ENCODE measurements at regions of chr12 and their contacts with region 1.

Region 1: DNA sequence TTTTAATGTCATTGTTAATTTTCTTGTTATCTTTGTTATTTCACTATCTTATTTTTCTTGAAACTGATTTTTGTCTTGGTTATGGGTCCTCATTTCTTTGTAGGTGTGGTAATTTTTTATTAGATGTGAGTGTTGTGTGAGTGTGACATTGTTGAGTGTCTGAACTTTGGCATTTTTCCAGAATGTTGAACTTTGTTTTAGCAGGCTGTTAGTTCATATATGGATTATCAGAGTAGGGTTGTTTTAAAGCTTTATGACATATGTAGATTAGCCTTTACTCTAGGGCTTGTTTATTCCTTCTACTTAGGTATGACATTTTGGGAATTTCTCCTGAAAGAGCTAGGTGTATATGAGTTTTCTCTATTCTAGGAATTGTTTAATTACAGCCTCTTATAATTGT is 103.9 kb downstream of the ARID2 start:
- DNase-seq: peak; percentile 12
- ATAC-seq: no peak
- H3K4me3 ChIP-seq: no peak overlapping the region
- H3K27ac ChIP-seq: no peak overlapping the region
- H3K4me1 ChIP-seq: peaks cover 11% of the 10 kb centered on the region
- H3K27me3 ChIP-seq: no peaks in the 10 kb centered on the region
- CTCF ChIP-seq: no peak
- EP300 ChIP-seq: no peak
- POLR2A ChIP-seq: no peak
- RAD21 ChIP-seq: no peak

Region 2: GRCh38 chr12:45688183-45688582 is 145.2 kb before region 1 on chr12:
- CTCF ChIA-PET with region 1: no interaction called
- POLR2A ChIA-PET with region 1: no interaction called
- in situ Hi-C with region 1: no loop called
- intact Hi-C with region 1: no loop called
- DNase-seq: no peak
- ATAC-seq: no peak
- H3K4me3 ChIP-seq: no peak overlapping the region
- H3K27ac ChIP-seq: no peak overlapping the region
- H3K4me1 ChIP-seq: no peaks in the 10 kb centered on the region
- H3K27me3 ChIP-seq: peaks cover 4 to 9% of the 10 kb centered on the region in 2 experiments; a peak in 2 of 5 replicates
- CTCF ChIP-seq: no peak
- EP300 ChIP-seq: no peak
- POLR2A ChIP-seq: no peak
- RAD21 ChIP-seq: no peak

Region 3: GRCh38 chr12:45762185-45763110 is 71.0 kb before region 1 on chr12:
- CTCF ChIA-PET with region 1: no interaction called
- POLR2A ChIA-PET with region 1: no interaction called
- in situ Hi-C with region 1: no loop called
- intact Hi-C with region 1: loop called (anchors 10 kb)
- DNase-seq: peak; percentile 28
- ATAC-seq: peak; percentile 80
- H3K4me3 ChIP-seq: no peak overlapping the region
- H3K27ac ChIP-seq: peak overlapping the region; percentile 61
- H3K4me1 ChIP-seq: peaks cover 18% of the 10 kb centered on the region
- H3K27me3 ChIP-seq: no peaks in the 10 kb centered on the region
- CTCF ChIP-seq: peak; percentile 61
- EP300 ChIP-seq: no peak
- POLR2A ChIP-seq: no peak
- RAD21 ChIP-seq: no peak

Measured in HepG2 (cell line).